Natural killer cell (primary cell): ENCODE measurements at regions of chr3 and their contacts with region 1.

Region 1: DNA sequence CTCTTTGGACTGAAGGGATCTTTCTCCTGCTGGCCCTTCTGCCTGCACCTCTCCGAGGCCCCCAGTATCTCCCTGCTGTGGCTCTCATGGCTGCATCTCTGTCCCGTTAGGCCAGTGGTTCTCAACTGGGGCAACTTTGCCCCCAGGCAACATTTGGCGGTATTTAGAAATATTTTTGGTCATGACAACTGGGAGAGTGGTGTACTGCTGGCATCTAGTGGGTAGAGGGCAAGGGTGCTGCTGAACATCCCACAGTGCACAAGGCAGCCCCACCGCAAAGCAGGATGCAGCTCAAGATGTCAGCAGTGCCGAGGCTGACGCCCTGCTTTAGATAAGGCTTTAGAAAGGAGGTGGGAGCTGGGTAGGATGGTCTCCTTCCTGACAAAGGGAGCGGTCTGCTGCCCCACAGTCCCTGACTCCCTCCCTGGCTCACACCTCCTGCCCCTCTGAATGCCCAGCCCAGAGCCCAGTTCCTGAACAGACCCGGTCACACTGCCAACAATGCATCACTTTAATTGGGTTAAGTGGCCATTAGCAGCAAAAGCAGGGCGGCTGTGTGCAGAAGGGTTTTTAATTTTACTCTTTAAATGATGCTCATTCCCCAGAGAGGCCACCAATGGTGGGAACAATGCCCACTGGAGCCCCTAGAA is 68.8 kb upstream of the TMEM115 start:
- DNase-seq: peak; percentile 60 to 73
- ATAC-seq: peak; percentile 80 to 84 (median 82)
- H3K4me3 ChIP-seq: no peak overlapping the region
- H3K4me3 Mint-ChIP-seq: peak overlapping the region; percentile 84
- H3K27ac ChIP-seq: peak overlapping the region; percentile 55
- H3K27ac Mint-ChIP-seq: peak overlapping the region; percentile 94 to 97
- H3K4me1 ChIP-seq: peaks cover 70% of the 10 kb centered on the region
- H3K4me1 Mint-ChIP-seq: peaks cover 46 to 83% of the 10 kb centered on the region in 2 donors
- H3K27me3 ChIP-seq: no peaks in the 10 kb centered on the region
- H3K27me3 Mint-ChIP-seq: no peaks in the 10 kb centered on the region
- CTCF ChIP-seq: peak; percentile 61

Region 2: GRCh38 chr3:50272911-50273693 is 155.0 kb before region 1 on chr3:
- intact Hi-C with region 1: loop called (anchors 5 kb)
- DNase-seq: peak; percentile 89 to 91
- ATAC-seq: peak; percentile 90 to 94 (median 93)
- H3K4me3 ChIP-seq: no peak overlapping the region
- H3K4me3 Mint-ChIP-seq: peak overlapping the region; percentile 70
- H3K27ac ChIP-seq: no peak overlapping the region
- H3K27ac Mint-ChIP-seq: peak overlapping the region; percentile 67 to 82
- H3K4me1 ChIP-seq: peaks cover 33% of the 10 kb centered on the region
- H3K4me1 Mint-ChIP-seq: peaks cover 11 to 32% of the 10 kb centered on the region in 2 donors
- H3K27me3 ChIP-seq: peaks cover 38% of the 10 kb centered on the region
- H3K27me3 Mint-ChIP-seq: peaks cover 13 to 35% of the 10 kb centered on the region in 2 donors
- CTCF ChIP-seq: peak; percentile 96

Region 3: DNA sequence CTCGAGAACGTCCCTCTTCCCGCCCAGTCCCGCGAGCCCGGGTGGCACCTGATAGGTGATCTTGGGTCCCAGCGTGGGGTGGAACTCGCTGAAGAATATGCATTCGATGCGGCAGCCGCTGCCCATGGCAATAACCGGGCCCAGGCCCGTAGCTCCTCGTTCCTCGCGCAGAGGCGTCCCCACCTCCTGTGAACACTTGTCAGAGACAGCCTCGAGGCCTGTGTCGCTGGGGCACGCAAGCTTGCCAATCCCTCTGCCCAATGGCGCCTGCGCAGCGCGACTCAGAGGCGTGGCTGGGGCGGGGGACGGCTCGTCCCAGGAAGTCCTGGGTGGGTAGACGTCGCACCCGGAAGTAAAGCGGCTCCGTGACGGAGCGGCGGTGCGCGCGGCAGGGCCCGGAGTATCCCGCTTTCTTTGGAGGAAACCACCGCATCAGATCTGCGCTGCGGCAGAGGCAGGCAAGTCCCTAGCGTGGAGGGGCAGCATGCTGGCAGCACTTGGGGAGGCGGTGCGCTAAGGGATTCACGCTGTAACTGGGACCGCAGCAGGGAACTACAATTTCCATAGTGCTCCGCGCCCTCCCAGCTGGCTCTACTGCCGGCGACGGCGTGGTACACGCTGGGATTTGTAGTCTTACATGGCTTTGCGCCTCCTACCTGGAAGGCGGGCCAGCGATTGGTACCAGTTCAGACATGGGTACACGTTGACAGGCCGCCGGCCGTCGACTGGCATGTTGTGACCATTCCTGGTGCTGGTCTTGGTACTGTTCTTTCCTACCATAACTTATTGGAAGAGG is 77.4 kb before region 1 on chr3 and contains the starts of genes CYB561D2 and NPRL2:
- intact Hi-C with region 1: loop called (anchors 1 kb)
- DNase-seq: peak; percentile 97 to 99
- ATAC-seq: peak; percentile 87 to 95 (median 88)
- H3K4me3 ChIP-seq: peak within 1 kb of the TSS; percentile 86
- H3K4me3 Mint-ChIP-seq: peak within 1 kb of the TSS; percentile 96
- H3K27ac ChIP-seq: peak within 1 kb of the TSS; percentile 90
- H3K27ac Mint-ChIP-seq: peak within 1 kb of the TSS; percentile 96 to 98
- H3K4me1 ChIP-seq: peaks cover 64% of the 10 kb centered on the region
- H3K4me1 Mint-ChIP-seq: peaks cover 36 to 68% of the 10 kb centered on the region in 2 donors
- H3K27me3 ChIP-seq: no peaks in the 10 kb centered on the region
- H3K27me3 Mint-ChIP-seq: no peaks in the 10 kb centered on the region
- CTCF ChIP-seq: no peak
- total RNA-seq, gene CYB561D2: 39.6 to 54.0 (median 50.5) TPM
- total RNA-seq, gene NPRL2: 78.9 to 87.6 (median 80.9) TPM

Region 4: DNA sequence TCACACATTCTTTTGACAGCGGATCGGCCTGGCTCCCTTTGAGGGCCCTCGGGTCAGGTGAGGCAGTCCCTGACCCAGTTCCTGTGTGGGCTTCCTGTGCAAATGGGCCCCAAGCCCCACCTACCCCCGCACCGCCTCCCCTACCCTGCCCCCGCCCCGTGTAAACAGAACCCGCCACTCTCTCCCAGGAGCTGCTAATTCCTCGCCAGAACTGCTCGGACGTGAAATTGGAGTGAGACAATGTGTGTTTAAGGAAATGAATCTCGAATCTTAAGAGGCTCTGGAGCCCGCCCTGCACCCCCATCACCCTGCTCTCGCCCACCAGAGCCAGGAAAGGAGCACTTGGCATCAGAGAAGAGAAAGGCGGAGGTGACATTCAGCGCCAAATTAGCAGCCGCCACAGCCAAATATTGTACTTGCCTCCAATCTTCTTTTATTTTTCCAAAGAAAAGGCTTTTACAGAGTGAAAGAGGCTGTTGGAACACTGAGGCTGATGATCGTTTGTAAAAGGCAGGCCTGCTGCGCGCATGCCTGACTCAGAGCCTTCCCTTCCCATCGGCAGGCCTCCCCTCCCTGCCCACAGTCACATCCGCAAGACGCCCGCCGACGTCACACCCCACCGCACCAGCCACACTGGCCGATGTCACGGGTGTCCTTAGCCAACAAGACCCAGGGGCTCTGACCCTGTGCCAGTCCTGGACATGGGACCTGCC is 22.3 kb after region 1 on chr3:
- intact Hi-C with region 1: loop called (anchors 1 kb)
- DNase-seq: peak; percentile 76 to 91
- ATAC-seq: peak; percentile 75 to 85 (median 83)
- H3K4me3 ChIP-seq: peak overlapping the region; percentile 36
- H3K4me3 Mint-ChIP-seq: peak overlapping the region; percentile 83
- H3K27ac ChIP-seq: peak overlapping the region; percentile 85
- H3K27ac Mint-ChIP-seq: peak overlapping the region; percentile 91 to 98
- H3K4me1 ChIP-seq: peaks cover 68% of the 10 kb centered on the region
- H3K4me1 Mint-ChIP-seq: peaks cover 46 to 77% of the 10 kb centered on the region in 2 donors
- H3K27me3 ChIP-seq: no peaks in the 10 kb centered on the region
- H3K27me3 Mint-ChIP-seq: no peaks in the 10 kb centered on the region
- CTCF ChIP-seq: no peak

Region 5: GRCh38 chr3:50473768-50474167 is 45.7 kb after region 1 on chr3:
- intact Hi-C with region 1: loop called (anchors 2 kb)
- DNase-seq: no peak
- ATAC-seq: no peak
- H3K4me3 ChIP-seq: no peak overlapping the region
- H3K4me3 Mint-ChIP-seq: peak overlapping the region; percentile 58
- H3K27ac ChIP-seq: peak overlapping the region; percentile 60
- H3K27ac Mint-ChIP-seq: peak overlapping the region in 1 of 2 donors; percentile 87
- H3K4me1 ChIP-seq: peaks cover 46% of the 10 kb centered on the region
- H3K4me1 Mint-ChIP-seq: peaks cover 42 to 72% of the 10 kb centered on the region in 2 donors
- H3K27me3 ChIP-seq: no peaks in the 10 kb centered on the region
- H3K27me3 Mint-ChIP-seq: no peaks in the 10 kb centered on the region
- CTCF ChIP-seq: no peak

Region 6: DNA sequence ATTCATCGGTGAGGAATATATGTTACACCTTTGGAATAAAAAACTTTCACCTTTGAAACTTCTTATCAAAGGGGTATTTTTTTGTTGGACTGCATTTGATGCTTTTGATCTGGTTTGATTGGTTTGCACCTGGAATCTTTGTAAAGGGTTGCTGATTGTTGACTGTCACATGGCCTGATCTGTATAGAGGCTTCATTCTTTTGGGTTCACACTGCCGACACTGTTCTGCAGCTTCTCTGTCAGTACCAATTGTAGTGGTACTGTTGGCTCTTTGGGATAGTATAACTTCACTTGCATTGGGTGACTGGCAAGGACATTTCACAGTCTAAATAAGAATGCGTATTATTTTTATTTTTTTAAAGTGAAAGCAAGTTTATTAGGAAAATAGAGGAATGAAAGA is 402.3 kb after region 1 on chr3:
- intact Hi-C with region 1: no loop called
- DNase-seq: no peak
- ATAC-seq: no peak
- H3K4me3 ChIP-seq: no peak overlapping the region
- H3K4me3 Mint-ChIP-seq: no peak overlapping the region
- H3K27ac ChIP-seq: no peak overlapping the region
- H3K27ac Mint-ChIP-seq: no peak overlapping the region
- H3K4me1 ChIP-seq: no peaks in the 10 kb centered on the region
- H3K4me1 Mint-ChIP-seq: no peaks in the 10 kb centered on the region
- H3K27me3 ChIP-seq: no peaks in the 10 kb centered on the region
- H3K27me3 Mint-ChIP-seq: peaks cover 12 to 38% of the 10 kb centered on the region in 2 donors
- CTCF ChIP-seq: no peak